CD4-positive, alpha-beta T cell (primary cell): ENCODE measurements at regions of chr15 and their contacts with region 1.

Region 1: GRCh38 chr15:56886932-56887781 is 31.3 kb upstream of the TCF12 start:
- DNase-seq: peak; percentile 58 to 94 (median 74)
- ATAC-seq: peak; percentile 86
- H3K4me3 ChIP-seq: peak overlapping the region; percentile 92
- H3K4me3 Mint-ChIP-seq: peak overlapping the region; percentile 92
- H3K27ac ChIP-seq: peak overlapping the region; percentile 77 to 92
- H3K27ac Mint-ChIP-seq: peak overlapping the region; percentile 96
- H3K4me1 ChIP-seq: peaks cover 19% of the 10 kb centered on the region
- H3K4me1 Mint-ChIP-seq: peaks cover 33% of the 10 kb centered on the region
- H3K27me3 ChIP-seq: no peaks in the 10 kb centered on the region
- H3K27me3 Mint-ChIP-seq: no peaks in the 10 kb centered on the region
- CTCF ChIP-seq: no peak

Region 2: GRCh38 chr15:56732921-56733797 is 154.0 kb before region 1 on chr15 and contains the start of gene ZNF280D:
- CTCF ChIA-PET with region 1: no interaction called
- POLR2A ChIA-PET with region 1: interaction called, 3 read pairs
- intact Hi-C with region 1: loop called (anchors 2 to 5 kb)
- DNase-seq: peak; percentile 65 to 91 (median 74)
- ATAC-seq: peak; percentile 87
- H3K4me3 ChIP-seq: peak within 1 kb of the TSS; percentile 79
- H3K4me3 Mint-ChIP-seq: peak within 1 kb of the TSS; percentile 89
- H3K27ac ChIP-seq: peak within 1 kb of the TSS in 1 of 2 donors; percentile 48
- H3K27ac Mint-ChIP-seq: peak within 1 kb of the TSS; percentile 92
- H3K4me1 ChIP-seq: peaks cover 27% of the 10 kb centered on the region
- H3K4me1 Mint-ChIP-seq: peaks cover 42% of the 10 kb centered on the region
- H3K27me3 ChIP-seq: no peaks in the 10 kb centered on the region
- H3K27me3 Mint-ChIP-seq: no peaks in the 10 kb centered on the region
- CTCF ChIP-seq: no peak
- total RNA-seq, gene ZNF280D: 27.2 to 30.3 TPM

Region 3: GRCh38 chr15:56957812-56958406 is 70.8 kb after region 1 on chr15:
- CTCF ChIA-PET with region 1: no interaction called
- POLR2A ChIA-PET with region 1: no interaction called
- intact Hi-C with region 1: loop called in 1 of 2 experiments (anchors 5 kb)
- DNase-seq: no peak
- ATAC-seq: peak; percentile 34
- H3K4me3 ChIP-seq: no peak overlapping the region
- H3K4me3 Mint-ChIP-seq: peak overlapping the region; percentile 11
- H3K27ac ChIP-seq: no peak overlapping the region
- H3K27ac Mint-ChIP-seq: no peak overlapping the region
- H3K4me1 ChIP-seq: peaks cover 4% of the 10 kb centered on the region
- H3K4me1 Mint-ChIP-seq: peaks cover 57% of the 10 kb centered on the region
- H3K27me3 ChIP-seq: no peaks in the 10 kb centered on the region
- H3K27me3 Mint-ChIP-seq: no peaks in the 10 kb centered on the region
- CTCF ChIP-seq: no peak